ENCODE measurements at regions of chr3 and their contacts with region 1.

Region 1: DNA sequence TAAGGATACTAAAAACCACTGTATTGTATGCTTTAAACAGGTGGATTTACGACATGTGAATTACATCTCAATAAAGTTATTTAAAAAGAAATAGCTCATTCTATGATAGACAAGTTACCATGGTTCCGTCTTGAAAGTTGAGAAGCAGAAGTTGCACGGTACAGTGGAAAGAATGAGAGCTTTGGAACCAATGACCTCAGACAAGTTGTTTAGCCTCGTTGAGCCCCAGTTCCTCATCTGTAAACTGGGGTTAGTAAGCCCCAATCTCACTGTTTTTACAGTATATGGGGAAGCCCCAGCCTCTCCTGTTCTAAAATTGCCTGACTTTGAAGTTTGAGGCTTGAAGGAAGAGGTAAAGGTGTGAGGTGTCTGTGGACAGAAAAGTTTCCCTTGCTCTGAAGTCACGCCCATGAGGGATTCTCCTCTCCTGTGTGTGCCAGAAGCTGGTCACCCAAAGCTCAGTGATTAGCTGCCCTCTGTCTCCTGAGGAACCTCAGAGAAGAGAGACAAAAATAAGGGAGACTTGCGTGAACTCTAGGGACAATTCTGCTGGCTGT is 10.0 kb downstream of the CRYGS start:
- DNase-seq: no peak
- ATAC-seq: peak; percentile 82
- H3K4me3 Mint-ChIP-seq: peak overlapping the region; percentile 77
- H3K27ac Mint-ChIP-seq: peak overlapping the region; percentile 97
- H3K4me1 Mint-ChIP-seq: peaks cover 83% of the 10 kb centered on the region
- H3K27me3 Mint-ChIP-seq: no peaks in the 10 kb centered on the region
- CTCF ChIP-seq: no peak

Region 2: GRCh38 chr3:185937689-185938463 is 596.3 kb before region 1 on chr3 and contains the start of gene TRA2B:
- CTCF ChIA-PET with region 1: interaction called, 27 read pairs
- POLR2A ChIA-PET with region 1: interaction called, 6 read pairs
- intact Hi-C with region 1: loop called (anchors 1 kb)
- DNase-seq: peak; percentile 96
- ATAC-seq: peak; percentile 87
- H3K4me3 Mint-ChIP-seq: peak within 1 kb of the TSS; percentile 99
- H3K27ac Mint-ChIP-seq: peak within 1 kb of the TSS; percentile 100
- H3K4me1 Mint-ChIP-seq: peaks cover 45% of the 10 kb centered on the region
- H3K27me3 Mint-ChIP-seq: no peaks in the 10 kb centered on the region
- CTCF ChIP-seq: no peak
- total RNA-seq, gene TRA2B: 213 and 219 TPM in 2 replicates

Region 3: DNA sequence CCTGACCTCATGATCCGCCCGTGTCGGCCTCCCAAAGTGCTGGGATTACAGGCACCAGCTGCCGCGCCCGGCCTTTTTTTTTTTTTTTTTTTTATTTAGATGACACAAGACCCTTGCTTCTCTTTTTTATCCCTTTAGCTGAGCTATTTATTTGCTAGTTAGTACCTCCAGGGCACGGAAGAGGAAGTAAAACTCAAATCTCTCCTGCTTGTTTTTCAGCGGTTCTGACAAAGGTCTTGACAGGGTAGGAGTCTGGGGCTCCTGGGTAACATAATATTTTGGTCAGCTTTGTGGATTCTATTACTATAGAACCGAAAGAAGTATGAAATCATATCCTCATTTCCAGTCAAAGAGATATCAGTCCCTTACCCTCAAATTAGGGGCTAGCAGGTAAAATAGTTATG is 381.3 kb before region 1 on chr3:
- CTCF ChIA-PET with region 1: interaction called, 3 read pairs
- POLR2A ChIA-PET with region 1: no interaction called
- intact Hi-C with region 1: loop called (anchors 1 kb)
- DNase-seq: no peak
- ATAC-seq: peak; percentile 92
- H3K4me3 Mint-ChIP-seq: peak overlapping the region; percentile 67
- H3K27ac Mint-ChIP-seq: peak overlapping the region; percentile 87
- H3K4me1 Mint-ChIP-seq: peaks cover 30% of the 10 kb centered on the region
- H3K27me3 Mint-ChIP-seq: no peaks in the 10 kb centered on the region
- CTCF ChIP-seq: no peak

Region 4: DNA sequence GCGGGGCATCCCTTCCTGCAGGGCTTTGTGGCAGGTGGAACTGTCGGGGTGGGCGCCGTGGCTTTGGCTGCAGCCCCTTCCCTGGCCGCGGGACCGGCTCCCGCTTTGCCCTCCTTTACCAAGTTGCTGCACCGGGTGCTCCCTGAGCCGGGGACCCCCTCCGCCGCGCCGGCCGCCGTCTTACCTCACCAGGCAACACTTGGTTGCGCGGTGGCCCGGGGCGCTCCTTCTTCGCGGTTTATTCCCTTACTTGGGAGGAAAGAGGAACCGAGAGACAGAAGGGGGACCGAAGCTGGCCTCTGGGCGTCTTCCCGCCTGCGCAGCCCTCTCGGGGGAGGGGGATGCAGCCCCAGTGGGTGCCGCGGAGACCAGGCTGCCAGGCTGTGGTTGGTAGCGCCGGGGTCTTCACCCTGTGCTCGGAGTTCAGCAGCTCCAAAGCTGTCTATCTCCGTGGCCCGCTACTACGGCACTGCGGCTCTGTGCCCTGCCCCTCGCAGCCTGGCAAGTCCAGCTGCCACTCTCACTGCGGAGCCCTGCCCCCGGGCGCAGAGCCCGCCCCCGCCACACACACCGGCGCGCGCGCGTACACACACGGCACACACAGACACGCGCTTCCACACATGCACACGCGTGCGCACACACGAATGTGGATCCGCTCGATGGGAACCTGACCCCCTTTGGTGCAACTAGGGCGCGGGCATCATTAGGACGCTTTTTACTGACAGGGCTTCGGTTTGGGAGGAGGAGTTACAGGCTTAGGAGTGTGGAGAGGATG is 172.2 kb before region 1 on chr3 and contains the start of gene DGKG:
- CTCF ChIA-PET with region 1: interaction called, 4 read pairs
- POLR2A ChIA-PET with region 1: interaction called, 12 read pairs
- intact Hi-C with region 1: loop called (anchors 1 kb)
- DNase-seq: peak; percentile 64
- ATAC-seq: peak; percentile 90
- H3K4me3 Mint-ChIP-seq: peak within 1 kb of the TSS; percentile 83
- H3K27ac Mint-ChIP-seq: peak within 1 kb of the TSS; percentile 38
- H3K4me1 Mint-ChIP-seq: peaks cover 28% of the 10 kb centered on the region
- H3K27me3 Mint-ChIP-seq: peaks cover 7% of the 10 kb centered on the region
- CTCF ChIP-seq: no peak
- total RNA-seq, gene DGKG: 3.9 and 4.2 TPM in 2 replicates

Region 5: DNA sequence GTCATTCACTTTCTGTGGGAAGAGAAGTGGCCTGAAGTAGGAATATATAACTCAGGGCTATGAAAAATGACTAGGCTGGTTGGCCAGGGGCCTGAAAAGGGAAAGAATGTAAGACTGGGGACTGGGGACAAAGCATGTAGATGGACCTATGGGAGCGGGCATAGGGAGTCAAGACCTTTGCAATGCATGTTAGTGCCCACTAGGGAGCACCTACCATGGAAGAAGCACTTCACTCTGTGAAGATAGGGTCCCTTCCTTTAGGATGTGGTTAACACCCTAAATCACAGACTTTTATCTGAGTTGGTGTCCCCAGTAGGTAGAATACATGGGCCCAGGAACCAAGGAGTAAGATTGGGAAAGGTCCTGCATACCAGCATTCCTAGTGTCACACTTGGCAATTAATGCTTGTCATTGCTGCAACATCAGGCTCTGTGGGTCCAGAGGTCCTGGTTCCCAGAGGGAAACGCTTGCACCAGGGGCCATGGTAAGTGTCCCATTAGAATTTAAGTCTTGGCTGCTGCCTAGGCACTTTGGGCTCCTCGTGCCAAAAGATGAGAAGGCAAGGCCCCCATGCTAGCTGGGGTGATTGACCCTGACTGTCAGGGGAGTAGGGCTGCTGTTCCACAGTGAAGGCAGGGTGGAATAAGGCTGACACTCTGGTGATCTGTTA is 69.6 kb before region 1 on chr3:
- CTCF ChIA-PET with region 1: no interaction called
- POLR2A ChIA-PET with region 1: no interaction called
- intact Hi-C with region 1: loop called (anchors 5 kb)
- DNase-seq: no peak
- ATAC-seq: no peak
- H3K4me3 Mint-ChIP-seq: no peak overlapping the region
- H3K27ac Mint-ChIP-seq: no peak overlapping the region
- H3K4me1 Mint-ChIP-seq: peaks cover 1% of the 10 kb centered on the region
- H3K27me3 Mint-ChIP-seq: no peaks in the 10 kb centered on the region
- CTCF ChIP-seq: no peak

Region 6: DNA sequence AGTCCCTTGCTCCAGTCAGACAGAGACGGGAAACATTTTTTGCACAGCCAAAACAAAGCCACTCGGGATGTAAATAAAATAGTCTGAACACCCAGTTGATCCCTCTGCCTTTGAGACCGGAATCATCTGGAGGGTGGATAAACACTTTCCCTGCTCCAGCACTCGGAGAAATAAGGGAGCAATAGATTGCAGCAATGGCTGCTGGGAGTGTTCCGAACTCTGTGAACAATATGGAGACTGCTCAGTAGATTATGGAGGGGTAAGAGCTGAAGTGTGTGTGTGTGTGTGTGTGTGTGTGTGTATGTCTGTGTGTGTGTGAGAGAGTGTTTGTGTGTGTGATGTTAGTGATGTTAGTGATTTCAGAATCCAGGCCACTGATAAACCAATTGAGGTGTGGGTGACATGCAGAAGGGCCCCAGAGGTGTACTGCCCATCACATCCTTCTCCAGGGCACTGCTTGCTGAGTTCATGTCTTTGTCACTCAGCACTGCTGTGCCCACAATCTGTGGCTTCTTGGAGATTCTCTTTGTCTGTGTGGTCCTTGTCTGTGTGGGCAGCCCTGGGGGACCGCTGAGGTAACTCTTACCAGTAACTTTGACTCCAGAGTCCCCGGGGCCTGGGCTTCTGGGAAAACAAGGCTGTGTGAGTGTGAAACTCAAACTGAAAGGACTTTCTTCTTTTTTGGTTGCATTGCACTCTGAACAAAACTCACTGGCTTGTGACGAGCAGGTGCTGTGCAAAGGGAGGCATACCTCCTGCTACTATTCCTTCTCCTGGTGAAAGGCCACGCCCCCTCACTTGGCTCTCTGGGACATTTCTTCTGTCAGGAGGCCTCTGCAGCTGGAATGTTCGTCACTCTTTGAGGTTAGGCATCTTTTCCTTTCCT is 13.0 kb before region 1 on chr3:
- CTCF ChIA-PET with region 1: interaction called, 46 read pairs
- POLR2A ChIA-PET with region 1: interaction called, 50 read pairs
- intact Hi-C with region 1: loop called (anchors 1 kb)
- DNase-seq: peak; percentile 33
- ATAC-seq: peak; percentile 33
- H3K4me3 Mint-ChIP-seq: peak overlapping the region; percentile 41
- H3K27ac Mint-ChIP-seq: peak overlapping the region; percentile 87
- H3K4me1 Mint-ChIP-seq: peaks cover 76% of the 10 kb centered on the region
- H3K27me3 Mint-ChIP-seq: peaks cover 2% of the 10 kb centered on the region
- CTCF ChIP-seq: no peak

Region 7: GRCh38 chr3:186882881-186883685 is 348.9 kb after region 1 on chr3:
- CTCF ChIA-PET with region 1: no interaction called
- POLR2A ChIA-PET with region 1: no interaction called
- intact Hi-C with region 1: no loop called
- DNase-seq: no peak
- ATAC-seq: no peak
- H3K4me3 Mint-ChIP-seq: no peak overlapping the region
- H3K27ac Mint-ChIP-seq: no peak overlapping the region
- H3K4me1 Mint-ChIP-seq: peaks cover 3% of the 10 kb centered on the region
- H3K27me3 Mint-ChIP-seq: peaks cover 5% of the 10 kb centered on the region
- CTCF ChIP-seq: no peak

Region 8: DNA sequence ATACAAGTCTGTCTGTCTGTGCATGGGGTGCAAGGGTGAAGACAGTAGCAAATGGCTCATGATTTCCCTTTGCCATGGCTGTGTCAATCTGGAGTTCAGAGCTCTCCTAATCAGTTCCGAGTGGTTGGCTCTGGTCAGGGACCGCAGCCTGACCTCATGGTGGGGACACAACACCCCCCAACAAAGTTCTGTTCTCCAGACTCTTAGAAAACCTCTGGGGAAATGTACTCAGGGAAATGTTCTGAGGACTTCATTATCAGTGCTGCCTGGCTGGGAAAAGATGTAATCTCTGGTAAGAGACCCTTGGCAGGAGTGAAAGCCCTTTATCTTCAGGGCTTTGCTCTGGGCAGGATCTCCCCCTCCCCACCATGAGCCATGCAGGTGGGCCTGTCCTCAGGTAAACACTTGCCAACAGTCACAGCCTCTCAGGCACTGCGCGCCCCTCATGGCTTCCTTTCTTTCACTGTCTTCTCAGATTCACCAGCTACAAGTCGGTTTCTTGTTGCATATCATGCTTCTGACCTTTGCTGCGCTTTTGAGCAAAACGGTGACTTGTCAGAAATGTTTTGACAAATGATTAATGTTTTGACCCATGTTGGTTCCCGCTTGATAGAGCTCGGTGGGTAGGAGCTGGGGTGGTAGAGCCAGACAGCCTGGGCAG is 491.6 kb after region 1 on chr3:
- CTCF ChIA-PET with region 1: no interaction called
- POLR2A ChIA-PET with region 1: no interaction called
- intact Hi-C with region 1: loop called (anchors 10 kb)
- DNase-seq: no peak
- ATAC-seq: peak; percentile 51
- H3K4me3 Mint-ChIP-seq: peak overlapping the region; percentile 84
- H3K27ac Mint-ChIP-seq: peak overlapping the region; percentile 93
- H3K4me1 Mint-ChIP-seq: peaks cover 93% of the 10 kb centered on the region
- H3K27me3 Mint-ChIP-seq: no peaks in the 10 kb centered on the region
- CTCF ChIP-seq: no peak